Aorta (tissue), 5 donors: ENCODE measurements at regions of chr3 and their contacts with region 1.

Region 1: DNA sequence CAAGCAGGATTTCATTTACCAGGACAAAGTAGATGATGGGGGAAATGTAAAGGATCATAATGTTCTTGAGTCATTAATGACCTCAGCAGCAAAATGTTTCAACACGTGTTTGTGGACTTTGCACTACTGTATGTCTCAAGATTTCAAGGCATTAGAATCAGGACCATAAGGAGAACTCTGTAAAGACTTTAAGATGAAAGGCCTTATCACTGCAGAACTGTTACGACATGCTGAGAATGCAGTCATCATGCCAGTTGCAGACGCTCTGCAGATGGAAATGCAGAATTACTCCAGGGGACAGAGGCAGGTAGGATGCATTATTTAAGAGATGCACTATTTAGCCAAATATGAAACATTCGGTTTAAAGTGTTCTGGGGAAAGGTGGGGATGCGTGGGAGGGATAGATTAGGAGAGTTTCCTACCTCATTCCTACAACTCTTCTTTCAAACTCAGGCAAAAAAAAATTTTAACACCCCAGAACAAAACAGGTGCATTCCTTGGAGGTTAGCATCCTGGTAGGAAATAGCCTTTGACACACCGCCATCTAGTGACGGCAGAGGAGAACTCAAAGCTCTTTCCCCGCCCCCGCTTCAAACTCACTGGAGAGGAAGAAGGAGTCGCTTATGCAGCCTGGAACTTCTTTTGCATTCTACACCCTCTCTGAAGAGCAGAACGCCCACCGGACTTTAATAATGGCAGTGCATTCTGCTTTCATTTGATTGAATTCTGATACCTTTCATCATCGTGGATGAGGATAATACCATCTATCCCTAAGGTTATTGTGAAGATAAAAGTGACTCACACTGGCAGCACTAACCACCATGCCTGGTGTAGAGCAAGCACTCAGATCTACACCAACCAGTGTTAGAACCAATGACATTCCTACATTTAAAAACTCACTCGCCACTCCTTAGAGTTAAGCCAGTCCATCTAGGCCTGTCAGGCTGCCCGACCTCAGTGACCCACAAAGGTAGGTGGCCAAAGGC is 43.1 kb upstream of the TOPAZ1 start:
- DNase-seq: peak in 1 of 2 donors; percentile 68
- ATAC-seq: peak; percentile 88
- H3K4me3 ChIP-seq: no peak overlapping the region
- H3K27ac ChIP-seq: no peak overlapping the region
- H3K4me1 ChIP-seq: no peaks in the 10 kb centered on the region
- H3K27me3 ChIP-seq: no peaks in the 10 kb centered on the region

Region 2: DNA sequence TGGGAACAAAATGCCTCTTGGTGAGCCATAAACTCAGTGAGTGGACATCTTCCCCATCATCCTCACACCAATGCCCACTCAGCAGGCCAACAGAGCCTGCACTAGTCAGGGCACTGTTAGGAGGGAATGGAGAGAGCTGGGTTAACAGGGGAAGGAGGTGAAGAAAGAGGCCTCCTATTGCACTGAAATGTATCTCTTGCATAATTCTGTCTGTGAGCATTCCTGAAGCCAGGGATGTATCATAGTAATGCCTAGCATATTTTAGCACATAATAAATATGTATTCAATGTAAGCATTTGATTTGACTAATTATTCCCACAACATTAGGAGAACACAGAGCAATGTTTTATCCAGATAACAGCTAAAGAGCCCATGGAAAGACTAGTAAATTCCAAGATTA is 658.0 kb before region 1 on chr3:
- intact Hi-C with region 1: loop called (anchors 5 kb)
- DNase-seq: no peak
- ATAC-seq: no peak
- H3K4me3 ChIP-seq: no peak overlapping the region
- H3K27ac ChIP-seq: no peak overlapping the region
- H3K4me1 ChIP-seq: no peaks in the 10 kb centered on the region
- H3K27me3 ChIP-seq: no peaks in the 10 kb centered on the region

Region 3: DNA sequence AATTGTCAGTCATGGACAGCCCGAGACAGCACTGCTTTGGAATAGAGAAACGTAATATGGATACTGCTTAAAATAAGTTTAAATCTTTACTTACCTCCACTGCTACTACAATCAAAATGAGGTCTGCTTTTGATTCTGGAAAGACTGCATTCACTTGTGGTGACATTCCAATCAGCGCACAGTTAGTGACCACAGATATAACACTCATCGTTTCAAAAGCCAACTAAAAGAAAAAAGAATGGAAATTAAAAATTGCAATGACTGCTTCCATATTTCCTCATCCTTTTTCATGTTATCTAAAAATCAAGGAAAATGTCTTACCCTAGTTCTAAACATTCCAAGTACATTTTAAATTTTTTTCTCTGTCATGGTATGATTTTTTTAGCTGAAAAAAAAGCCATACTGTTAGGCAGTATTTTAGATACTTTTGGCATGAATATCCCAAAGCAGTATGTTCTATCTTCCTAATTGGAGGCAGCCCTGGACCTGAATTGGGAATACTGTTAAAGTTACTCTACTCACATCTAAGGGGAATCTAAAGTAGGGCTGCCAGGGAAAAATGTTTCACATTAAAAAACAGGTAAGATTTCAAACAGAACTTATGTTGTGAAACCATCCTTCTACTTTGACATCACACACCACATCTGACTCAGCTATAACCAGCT is 648.8 kb before region 1 on chr3:
- intact Hi-C with region 1: loop called (anchors 5 kb)
- DNase-seq: no peak
- ATAC-seq: no peak
- H3K4me3 ChIP-seq: no peak overlapping the region
- H3K27ac ChIP-seq: no peak overlapping the region
- H3K4me1 ChIP-seq: no peaks in the 10 kb centered on the region
- H3K27me3 ChIP-seq: no peaks in the 10 kb centered on the region

Region 4: GRCh38 chr3:43866529-43867353 is 331.8 kb before region 1 on chr3:
- intact Hi-C with region 1: loop called in 1 of 2 experiments (anchors 10 kb)
- DNase-seq: peak in 1 of 2 donors; percentile 21
- ATAC-seq: no peak
- H3K4me3 ChIP-seq: no peak overlapping the region
- H3K27ac ChIP-seq: no peak overlapping the region
- H3K4me1 ChIP-seq: peaks cover 3 to 5% of the 10 kb centered on the region in 2 donors
- H3K27me3 ChIP-seq: no peaks in the 10 kb centered on the region

Region 5: GRCh38 chr3:44114142-44114541 is 84.4 kb before region 1 on chr3:
- intact Hi-C with region 1: no loop called
- DNase-seq: peak; percentile 47 to 83
- ATAC-seq: no peak
- H3K4me3 ChIP-seq: no peak overlapping the region
- H3K27ac ChIP-seq: no peak overlapping the region
- H3K4me1 ChIP-seq: no peaks in the 10 kb centered on the region
- H3K27me3 ChIP-seq: no peaks in the 10 kb centered on the region

Region 6: GRCh38 chr3:44125882-44126281 is 72.7 kb before region 1 on chr3:
- intact Hi-C with region 1: no loop called
- DNase-seq: no peak
- ATAC-seq: no peak
- H3K4me3 ChIP-seq: no peak overlapping the region
- H3K27ac ChIP-seq: no peak overlapping the region
- H3K4me1 ChIP-seq: no peaks in the 10 kb centered on the region
- H3K27me3 ChIP-seq: no peaks in the 10 kb centered on the region